Esophagus muscularis mucosa (tissue), 4 donors: ENCODE measurements at regions of chr16 and their contacts with region 1.

Region 1: DNA sequence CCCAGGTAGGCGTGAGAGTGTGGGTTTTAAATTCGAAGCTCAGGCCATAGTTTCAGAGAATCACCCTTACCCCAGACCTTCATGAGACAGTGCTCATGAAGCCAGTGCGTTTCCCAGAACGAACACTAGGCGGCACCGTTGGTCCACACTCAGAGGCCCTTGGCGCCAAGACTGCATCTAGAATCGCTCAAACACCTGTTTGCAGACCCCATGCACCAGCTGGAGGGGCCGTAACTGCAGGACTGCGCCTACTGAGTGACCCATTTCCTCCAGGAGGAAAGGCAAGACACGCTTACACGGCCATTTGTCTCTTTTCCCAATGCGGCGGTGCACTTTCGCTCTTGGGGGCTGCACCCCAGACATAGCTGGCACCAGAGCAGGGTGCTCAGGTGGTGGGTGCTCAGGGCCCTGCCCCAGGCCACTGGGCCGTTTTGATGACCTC is 34.0 kb downstream of the ADGRG5 start:
- DNase-seq: peak; percentile 95
- H3K4me3 ChIP-seq: no peak overlapping the region
- H3K27ac ChIP-seq: no peak overlapping the region
- H3K4me1 ChIP-seq: peaks cover 0 to 5% (median 4%) of the 10 kb centered on the region in 4 donors
- H3K27me3 ChIP-seq: peaks cover 0 to 49% (median 0%) of the 10 kb centered on the region in 4 donors
- CTCF ChIP-seq: peak; percentile 82 to 96 (median 84)
- EP300 ChIP-seq: no peak
- POLR2A ChIP-seq: no peak

Region 2: DNA sequence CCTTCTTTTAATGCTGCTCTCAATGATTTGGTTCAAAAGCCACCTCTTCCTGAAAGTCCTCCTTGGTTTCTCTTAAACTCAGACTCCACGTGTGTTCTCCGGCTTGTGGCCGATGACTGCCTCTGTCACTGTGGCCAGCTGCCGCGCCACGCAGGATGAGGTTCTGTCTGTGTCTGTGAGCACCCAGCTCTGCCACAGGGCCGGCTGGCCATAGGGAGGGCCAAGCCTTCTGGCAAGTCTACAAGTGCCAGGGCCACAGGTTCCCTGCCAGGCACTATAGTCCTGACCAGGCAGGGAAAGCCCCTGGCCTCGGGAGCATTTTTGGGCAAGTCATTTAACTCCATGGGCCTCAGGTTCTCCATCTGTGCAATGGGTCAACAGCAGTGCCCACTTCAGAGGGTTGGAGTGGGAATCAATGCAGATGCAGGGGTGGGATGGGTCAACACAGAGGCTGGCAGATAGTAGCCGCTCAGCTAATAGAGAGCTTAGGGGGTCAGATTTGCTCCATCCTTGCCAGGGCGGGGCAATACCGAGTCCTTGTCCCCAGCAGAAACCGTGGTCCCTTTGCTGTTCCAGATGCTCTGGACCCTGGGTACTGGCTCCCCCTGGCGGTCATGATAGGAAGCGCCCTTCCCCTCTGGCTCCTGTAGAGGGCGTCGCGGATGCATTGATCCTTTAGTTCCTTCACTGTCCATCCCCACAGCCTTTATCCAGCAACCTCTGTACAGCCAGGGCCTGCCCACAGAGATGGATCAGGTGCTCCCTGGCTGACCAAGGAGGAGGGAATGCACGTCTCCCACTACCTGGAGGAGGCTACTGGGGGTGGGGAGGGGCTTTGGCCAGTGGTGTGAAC is 72.4 kb after region 1 on chr16:
- intact Hi-C with region 1: loop called (anchors 5 kb)
- DNase-seq: no peak
- H3K4me3 ChIP-seq: no peak overlapping the region
- H3K27ac ChIP-seq: peak overlapping the region in 1 of 4 donors; percentile 59
- H3K4me1 ChIP-seq: peaks cover 17 to 34% (median 25%) of the 10 kb centered on the region in 4 donors
- H3K27me3 ChIP-seq: peaks cover 0 to 68% (median 0%) of the 10 kb centered on the region in 4 donors
- CTCF ChIP-seq: peak in 2 of 3 experiments; percentile 93 to 97
- EP300 ChIP-seq: no peak
- POLR2A ChIP-seq: no peak

Region 3: DNA sequence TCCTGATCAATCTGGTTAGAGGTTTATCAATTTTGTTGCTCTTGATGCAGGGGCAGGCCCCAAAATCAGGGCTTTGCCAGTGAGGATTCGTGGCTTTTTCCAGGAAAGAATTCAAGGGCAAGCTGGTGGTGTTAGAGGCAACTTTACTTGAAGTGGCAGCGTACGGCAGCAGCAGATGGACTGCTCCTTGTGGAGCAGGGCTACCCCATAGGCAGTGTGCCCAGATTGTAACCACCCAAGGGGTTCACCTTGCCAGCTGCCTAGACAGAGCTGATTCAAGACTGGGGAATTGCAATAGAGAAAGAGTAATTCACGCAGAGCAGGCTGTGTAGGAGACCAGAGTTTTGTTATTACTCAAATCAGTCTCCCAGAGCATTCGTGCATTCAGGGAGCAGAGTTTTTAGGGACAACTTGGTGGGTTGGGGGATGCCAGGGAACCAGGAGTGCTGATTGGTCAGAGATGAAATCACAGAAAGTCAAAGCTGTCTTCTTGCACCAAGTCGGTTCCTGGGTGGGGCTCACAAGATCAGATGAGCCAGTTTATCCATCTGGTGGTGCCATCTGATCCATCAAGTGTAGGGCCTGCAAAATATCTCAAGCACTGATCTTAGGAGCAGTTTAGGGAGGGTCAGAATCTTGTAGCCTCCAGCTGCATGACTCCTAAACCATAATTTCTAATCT is 135.0 kb after region 1 on chr16:
- intact Hi-C with region 1: loop called (anchors 10 kb)
- DNase-seq: no peak
- H3K4me3 ChIP-seq: no peak overlapping the region
- H3K27ac ChIP-seq: no peak overlapping the region
- H3K4me1 ChIP-seq: no peaks in the 10 kb centered on the region
- H3K27me3 ChIP-seq: no peaks in the 10 kb centered on the region
- CTCF ChIP-seq: no peak
- EP300 ChIP-seq: no peak
- POLR2A ChIP-seq: no peak